H1 (cell line): ENCODE measurements at regions of chr10 and their contacts with region 1.

Region 1: DNA sequence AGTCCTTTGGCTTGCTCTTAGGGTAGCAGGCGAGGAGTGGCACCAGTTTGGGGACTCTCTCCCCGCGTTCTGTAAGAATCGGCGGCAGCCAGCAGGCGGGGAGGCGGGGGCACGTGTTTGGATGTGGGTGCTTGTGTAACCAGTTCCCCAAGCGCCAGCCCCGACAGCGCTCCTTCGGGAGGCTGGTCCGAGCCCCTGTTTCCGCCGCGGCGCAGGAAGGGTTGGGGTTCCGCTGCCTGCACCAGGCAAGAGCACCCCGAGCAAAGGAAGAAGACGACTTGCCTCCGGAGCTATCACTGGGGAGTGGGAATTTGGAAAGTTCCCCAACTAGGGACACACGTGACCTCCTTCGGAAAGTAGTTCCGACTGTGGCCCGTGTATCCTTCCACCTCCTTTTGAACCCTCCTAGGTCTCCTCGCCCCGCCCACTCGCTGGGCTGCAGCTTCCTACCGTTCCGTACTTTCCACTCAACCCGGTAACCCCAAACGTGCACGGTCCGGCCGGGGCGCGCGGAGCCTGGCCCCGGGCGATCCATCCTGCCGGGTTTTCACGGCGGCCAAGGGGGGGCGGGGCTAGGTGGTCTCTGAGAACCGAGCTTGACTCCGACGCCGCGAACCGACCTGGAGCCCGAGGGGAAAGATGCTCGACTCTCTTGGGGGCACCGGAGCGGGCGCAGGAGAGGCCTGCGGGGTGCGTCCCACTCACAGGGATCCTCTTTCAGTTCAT is 1.2 kb downstream of the KLLN start:
- DNase-seq: peak; percentile 95 to 98
- H3K4me3 ChIP-seq: peak overlapping the region; percentile 83 to 96 (median 90)
- H3K27ac ChIP-seq: peak overlapping the region; percentile 92
- H3K4me1 ChIP-seq: peaks cover 0 to 6% (median 1%) of the 10 kb centered on the region in 4 experiments; a peak in 4 of 7 replicates
- H3K27me3 ChIP-seq: no peaks in the 10 kb centered on the region
- CTCF ChIP-seq: peak in 1 of 3 experiments; percentile 5; a peak in 1 of 4 replicates
- EP300 ChIP-seq: peak in 1 of 2 experiments; percentile 88; a peak in 1 of 3 replicates
- POLR2A ChIP-seq: peak; percentile 47 to 95
- RAD21 ChIP-seq: peak; percentile 30 to 36; a peak in 3 of 4 replicates

Region 2: DNA sequence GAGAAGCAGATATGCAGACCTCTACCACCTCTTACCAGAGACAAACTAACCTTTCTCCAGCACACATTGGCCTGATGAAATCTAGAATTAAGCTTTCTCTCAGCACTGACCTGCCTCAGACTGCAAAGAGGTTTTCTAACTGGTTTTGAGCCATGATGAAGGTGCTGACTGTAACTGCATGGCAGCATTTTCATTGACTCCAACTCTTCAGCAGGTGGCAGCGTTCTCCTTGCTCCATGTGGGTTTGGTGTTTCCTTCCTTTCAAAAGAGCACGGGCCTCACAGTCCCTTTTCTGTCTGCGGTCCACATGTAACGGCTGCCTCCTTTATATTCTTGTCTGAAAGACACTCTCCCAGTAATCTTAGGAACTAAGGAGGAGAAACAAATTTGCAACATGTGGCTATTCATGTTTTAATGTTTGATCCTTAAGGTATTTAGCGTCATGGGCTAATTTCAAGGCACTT is 11.3 kb before region 1 on chr10:
- CTCF ChIA-PET with region 1: interaction called, 15 read pairs
- POLR2A ChIA-PET with region 1: interaction called, 10 read pairs
- DNase-seq: no peak
- H3K4me3 ChIP-seq: no peak overlapping the region
- H3K27ac ChIP-seq: no peak overlapping the region
- H3K4me1 ChIP-seq: no peaks in the 10 kb centered on the region
- H3K27me3 ChIP-seq: no peaks in the 10 kb centered on the region
- CTCF ChIP-seq: peak; percentile 62 to 88 (median 72)
- EP300 ChIP-seq: no peak
- POLR2A ChIP-seq: no peak
- RAD21 ChIP-seq: peak; percentile 91

Region 3: DNA sequence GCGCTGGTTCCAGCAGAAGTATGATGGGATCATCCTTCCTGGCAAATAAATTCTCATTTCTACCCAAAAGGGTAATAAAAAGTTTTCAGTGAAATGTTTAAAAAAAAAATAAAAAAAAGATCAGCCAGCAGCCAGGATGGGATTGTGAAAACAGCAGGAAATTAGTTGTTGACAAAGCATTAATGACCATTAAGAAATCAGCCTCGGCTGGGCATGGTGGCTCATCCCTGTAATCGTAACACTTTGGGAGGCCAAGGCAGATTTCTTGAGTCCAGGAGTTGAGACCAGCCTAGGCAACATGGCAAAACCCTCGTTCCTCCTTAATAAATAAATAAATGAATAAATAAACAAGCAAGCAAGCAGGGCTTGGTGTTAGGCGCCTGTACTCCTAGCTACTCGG is 83.9 kb after region 1 on chr10:
- CTCF ChIA-PET with region 1: no interaction called
- POLR2A ChIA-PET with region 1: interaction called, 24 read pairs
- DNase-seq: no peak
- H3K4me3 ChIP-seq: no peak overlapping the region
- H3K27ac ChIP-seq: no peak overlapping the region
- H3K4me1 ChIP-seq: no peaks in the 10 kb centered on the region
- H3K27me3 ChIP-seq: no peaks in the 10 kb centered on the region
- CTCF ChIP-seq: no peak
- EP300 ChIP-seq: no peak
- POLR2A ChIP-seq: no peak
- RAD21 ChIP-seq: no peak

Region 4: DNA sequence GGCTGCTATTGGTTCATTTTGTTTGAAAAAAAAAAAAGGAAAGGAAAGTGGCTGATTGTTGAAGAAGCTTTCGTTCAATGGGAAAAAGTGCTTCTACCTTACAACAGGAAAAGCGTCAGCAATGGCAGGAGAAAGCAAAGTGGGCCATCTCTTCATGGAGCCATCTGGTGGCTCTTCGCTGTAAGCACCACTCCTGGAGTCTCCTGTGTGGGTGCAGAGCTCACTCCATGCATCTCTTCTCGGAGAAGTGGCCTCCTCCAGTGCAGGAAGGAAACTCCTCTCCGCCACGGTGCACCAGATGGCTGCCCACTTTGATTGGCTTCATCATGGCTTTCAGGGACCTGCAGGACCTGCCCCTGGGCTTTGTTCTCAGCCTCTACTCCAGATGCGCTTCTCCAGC is 252.3 kb after region 1 on chr10:
- CTCF ChIA-PET with region 1: interaction called, 12 read pairs
- POLR2A ChIA-PET with region 1: interaction called, 8 read pairs
- DNase-seq: no peak
- H3K4me3 ChIP-seq: no peak overlapping the region
- H3K27ac ChIP-seq: no peak overlapping the region
- H3K4me1 ChIP-seq: no peaks in the 10 kb centered on the region; a peak in 2 of 7 replicates
- H3K27me3 ChIP-seq: no peaks in the 10 kb centered on the region
- CTCF ChIP-seq: peak; percentile 61 to 82 (median 69)
- EP300 ChIP-seq: no peak
- POLR2A ChIP-seq: no peak
- RAD21 ChIP-seq: peak; percentile 66 to 75